ENCODE measurements at regions of chr4 and their contacts with region 1.

Region 1: GRCh38 chr4:102535398-102536082 is 34.4 kb downstream of the NFKB1 start:
- DNase-seq: no peak
- H3K4me3 Mint-ChIP-seq: no peak overlapping the region
- H3K27ac Mint-ChIP-seq: peak overlapping the region; percentile 65
- H3K4me1 Mint-ChIP-seq: peaks cover 72% of the 10 kb centered on the region
- H3K27me3 Mint-ChIP-seq: no peaks in the 10 kb centered on the region

Region 2: GRCh38 chr4:102525097-102525496 is 10.4 kb before region 1 on chr4:
- CTCF ChIA-PET with region 1: interaction called, 6 read pairs
- intact Hi-C with region 1: loop called (anchors 1 kb)
- DNase-seq: peak; percentile 22
- H3K4me3 Mint-ChIP-seq: peak overlapping the region; percentile 47
- H3K27ac Mint-ChIP-seq: peak overlapping the region; percentile 83
- H3K4me1 Mint-ChIP-seq: peaks cover 88% of the 10 kb centered on the region
- H3K27me3 Mint-ChIP-seq: no peaks in the 10 kb centered on the region

Region 3: GRCh38 chr4:102564399-102565059 is 29.0 kb after region 1 on chr4:
- CTCF ChIA-PET with region 1: interaction called, 6 read pairs
- intact Hi-C with region 1: loop called (anchors 1 kb)
- DNase-seq: peak; percentile 66
- H3K4me3 Mint-ChIP-seq: no peak overlapping the region
- H3K27ac Mint-ChIP-seq: peak overlapping the region; percentile 75
- H3K4me1 Mint-ChIP-seq: peaks cover 78% of the 10 kb centered on the region
- H3K27me3 Mint-ChIP-seq: no peaks in the 10 kb centered on the region

Region 4: DNA sequence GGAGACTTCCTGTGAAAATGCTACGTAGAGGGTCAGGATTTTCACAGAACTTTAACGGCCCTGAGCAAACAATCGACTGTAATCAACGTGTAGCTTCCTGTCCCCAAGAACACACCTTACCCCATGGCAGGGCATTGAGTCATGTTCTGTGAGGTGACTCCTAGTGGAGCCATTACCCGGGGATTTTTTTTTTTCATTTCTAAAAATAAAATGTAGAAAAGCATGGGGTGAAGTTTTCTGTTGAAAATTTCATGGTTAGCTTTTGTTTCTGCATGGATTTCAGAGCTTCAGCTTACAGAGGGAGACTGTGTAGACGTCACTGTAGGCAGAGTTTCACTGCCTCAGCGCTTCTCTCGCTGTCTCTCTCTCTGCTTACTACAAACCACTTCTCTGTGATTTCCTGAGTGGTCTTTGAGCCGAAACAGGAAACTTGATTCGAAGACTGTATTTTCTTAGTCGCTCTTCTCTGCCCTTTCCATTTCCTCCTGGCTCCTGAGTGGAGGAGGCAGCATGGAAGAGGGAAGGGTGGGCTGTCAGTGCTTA is 77.4 kb after region 1 on chr4:
- CTCF ChIA-PET with region 1: interaction called, 4 read pairs
- intact Hi-C with region 1: loop called (anchors 2 kb)
- DNase-seq: peak; percentile 75
- H3K4me3 Mint-ChIP-seq: peak overlapping the region; percentile 48
- H3K27ac Mint-ChIP-seq: peak overlapping the region; percentile 89
- H3K4me1 Mint-ChIP-seq: peaks cover 78% of the 10 kb centered on the region
- H3K27me3 Mint-ChIP-seq: no peaks in the 10 kb centered on the region